Sigmoid colon (tissue), 7 donors: ENCODE measurements at regions of chr5 and their contacts with region 1.

Region 1: GRCh38 chr5:154857530-154858296 is 714 bp upstream of the CNOT8 start:
- DNase-seq: peak; percentile 99
- H3K4me3 ChIP-seq: peak overlapping the region; percentile 78 to 91 (median 86)
- H3K27ac ChIP-seq: peak overlapping the region; percentile 96 to 99 (median 98)
- H3K4me1 ChIP-seq: peaks cover 0 to 49% (median 45%) of the 10 kb centered on the region in 4 donors
- H3K27me3 ChIP-seq: no peaks in the 10 kb centered on the region
- CTCF ChIP-seq: no peak
- EP300 ChIP-seq: peak in 1 of 4 donors; percentile 27
- POLR2A ChIP-seq: peak; percentile 63 to 68

Region 2: DNA sequence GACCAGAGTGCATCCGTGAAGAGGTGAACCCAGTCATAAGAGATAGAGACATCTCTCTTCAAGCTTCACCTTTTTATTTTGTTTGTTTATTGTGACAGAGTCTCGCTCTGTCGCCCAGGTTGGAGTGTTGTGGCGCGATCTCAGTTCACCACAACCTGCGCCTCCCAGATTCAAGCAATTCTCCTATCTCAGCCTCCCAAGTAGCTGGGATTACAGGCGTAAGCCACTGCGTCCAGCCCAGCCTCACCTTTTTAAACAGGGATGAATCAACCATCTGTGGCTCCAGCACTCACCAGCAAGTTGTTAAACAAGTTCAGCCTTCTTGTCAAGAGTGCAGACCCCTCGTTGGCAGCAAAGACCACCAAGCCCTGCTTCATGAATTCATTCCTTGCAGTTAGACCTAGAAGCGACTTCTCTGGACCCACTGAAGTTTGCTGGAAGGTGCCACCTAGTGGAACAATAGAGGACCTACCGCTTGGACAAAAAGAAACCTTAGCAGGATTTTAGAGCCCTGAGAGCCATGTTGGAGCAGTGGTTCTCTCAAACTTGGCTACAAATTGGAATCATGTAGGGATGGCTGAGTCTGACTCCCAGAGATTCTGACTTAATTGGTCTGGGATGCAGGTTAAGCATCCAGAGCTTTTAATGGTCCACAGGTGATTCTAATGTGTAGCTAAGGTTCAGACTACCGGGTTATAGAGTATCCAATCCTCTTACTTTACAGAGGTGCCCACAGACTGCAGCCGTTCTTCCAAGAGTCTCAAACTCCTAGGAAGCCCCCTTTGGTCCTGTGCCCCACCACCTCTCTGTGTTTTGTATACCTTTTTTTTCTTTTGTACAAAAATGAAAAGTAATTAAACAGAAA is 677.6 kb before region 1 on chr5:
- intact Hi-C with region 1: no loop called
- DNase-seq: peak; percentile 71
- H3K4me3 ChIP-seq: no peak overlapping the region
- H3K27ac ChIP-seq: no peak overlapping the region
- H3K4me1 ChIP-seq: peaks cover 0 to 9% (median 4%) of the 10 kb centered on the region in 4 donors
- H3K27me3 ChIP-seq: no peaks in the 10 kb centered on the region
- CTCF ChIP-seq: peak in 3 of 4 experiments; percentile 73 to 83 (median 76)
- EP300 ChIP-seq: no peak
- POLR2A ChIP-seq: no peak

Region 3: GRCh38 chr5:154228696-154229095 is 629.0 kb before region 1 on chr5:
- intact Hi-C with region 1: no loop called
- DNase-seq: no peak
- H3K4me3 ChIP-seq: no peak overlapping the region
- H3K27ac ChIP-seq: no peak overlapping the region
- H3K4me1 ChIP-seq: peaks cover 0 to 8% (median 3%) of the 10 kb centered on the region in 4 donors
- H3K27me3 ChIP-seq: no peaks in the 10 kb centered on the region
- CTCF ChIP-seq: no peak
- EP300 ChIP-seq: no peak
- POLR2A ChIP-seq: no peak

Region 4: GRCh38 chr5:154445422-154446182 is 412.1 kb before region 1 on chr5 and contains the start of gene SAP30L:
- intact Hi-C with region 1: loop called (anchors 10 kb)
- DNase-seq: peak; percentile 97
- H3K4me3 ChIP-seq: peak within 1 kb of the TSS; percentile 77 to 94 (median 84)
- H3K27ac ChIP-seq: peak within 1 kb of the TSS; percentile 90 to 93 (median 92)
- H3K4me1 ChIP-seq: peaks cover 0 to 41% (median 33%) of the 10 kb centered on the region in 4 donors
- H3K27me3 ChIP-seq: no peaks in the 10 kb centered on the region
- CTCF ChIP-seq: no peak
- EP300 ChIP-seq: no peak
- POLR2A ChIP-seq: peak; percentile 81
- total RNA-seq, gene SAP30L: 36.0 to 51.7 (median 42.9) TPM

Region 5: DNA sequence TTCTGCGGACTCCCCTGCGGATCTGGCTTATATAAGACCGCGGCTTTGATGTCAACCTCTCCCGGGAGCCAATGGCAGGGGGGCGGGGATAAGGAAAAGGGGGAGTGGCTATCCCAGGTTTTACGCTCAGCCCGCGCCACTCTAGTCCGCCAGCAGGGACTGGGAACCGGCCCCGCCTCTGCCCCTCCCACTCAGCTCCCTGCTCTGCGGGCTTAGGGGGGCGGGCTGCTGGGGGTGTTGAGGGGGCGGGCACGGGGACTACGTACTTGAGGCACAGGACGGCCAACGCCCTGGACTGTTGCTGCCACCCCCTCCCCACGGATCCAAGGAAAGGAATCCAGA is 379.5 kb before region 1 on chr5 and contains the start of gene HAND1:
- intact Hi-C with region 1: loop called (anchors 5 kb)
- DNase-seq: peak; percentile 98
- H3K4me3 ChIP-seq: peak within 1 kb of the TSS; percentile 70 to 77 (median 72)
- H3K27ac ChIP-seq: peak within 1 kb of the TSS in 3 of 4 donors; percentile 91 to 96 (median 94)
- H3K4me1 ChIP-seq: peaks cover 0 to 73% (median 67%) of the 10 kb centered on the region in 4 donors
- H3K27me3 ChIP-seq: peaks cover 0 to 67% (median 9%) of the 10 kb centered on the region in 3 donors
- CTCF ChIP-seq: peak in 1 of 4 experiments; percentile 10
- EP300 ChIP-seq: peak in 1 of 4 donors; percentile 20
- POLR2A ChIP-seq: no peak
- total RNA-seq, gene HAND1: 45.6 to 69.2 (median 48.9) TPM

Region 6: DNA sequence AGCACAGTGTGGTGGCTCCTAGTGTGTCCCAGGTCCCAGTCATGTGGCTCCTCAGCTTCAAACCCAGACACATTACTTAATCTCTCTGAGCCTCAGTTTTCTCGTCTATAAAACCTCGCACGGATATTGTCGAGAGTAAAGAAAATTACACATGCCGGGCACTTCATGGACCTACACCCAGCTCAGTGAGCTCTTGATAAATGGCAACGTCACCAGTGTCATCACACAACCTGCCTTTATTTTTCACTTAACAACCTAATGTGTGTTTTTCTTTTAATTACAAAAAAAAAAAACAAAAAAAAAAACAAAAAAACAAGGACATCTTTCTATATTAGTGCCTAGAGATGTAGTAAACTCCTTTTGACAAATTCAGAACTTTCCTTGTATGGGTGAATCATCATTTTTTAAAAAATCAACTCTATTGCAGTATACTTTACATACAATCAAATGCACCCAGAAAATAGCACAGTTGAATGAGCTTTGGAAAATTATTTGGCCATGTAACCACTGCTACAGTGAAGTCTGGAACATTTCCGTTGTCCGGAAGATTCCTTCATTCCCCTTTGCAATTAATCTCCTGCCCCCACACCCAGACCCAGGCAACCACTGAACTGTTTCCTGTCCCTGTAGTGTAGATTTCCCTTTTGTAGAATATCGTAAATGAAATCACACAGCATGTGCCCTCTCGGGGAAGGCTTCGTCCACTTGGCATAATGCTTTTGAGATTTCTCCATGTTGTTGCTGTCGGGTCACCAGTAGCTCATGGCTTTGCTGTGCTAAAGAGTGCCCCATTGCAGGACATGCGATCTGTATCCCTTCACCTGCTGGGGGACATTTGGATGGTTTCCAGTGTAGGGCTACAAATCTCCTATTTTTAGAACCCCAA is 203.0 kb before region 1 on chr5:
- intact Hi-C with region 1: loop called (anchors 5 kb)
- DNase-seq: no peak
- H3K4me3 ChIP-seq: peak overlapping the region in 3 of 4 donors; percentile 22 to 34 (median 29)
- H3K27ac ChIP-seq: peak overlapping the region in 3 of 4 donors; percentile 29 to 64 (median 48)
- H3K4me1 ChIP-seq: peaks cover 0 to 17% (median 11%) of the 10 kb centered on the region in 4 donors
- H3K27me3 ChIP-seq: no peaks in the 10 kb centered on the region
- CTCF ChIP-seq: no peak
- EP300 ChIP-seq: no peak
- POLR2A ChIP-seq: no peak

Region 7: GRCh38 chr5:154754460-154755360 is 103.0 kb before region 1 on chr5:
- intact Hi-C with region 1: loop called (anchors 2 kb)
- DNase-seq: peak; percentile 100
- H3K4me3 ChIP-seq: peak overlapping the region; percentile 88 to 99 (median 96)
- H3K27ac ChIP-seq: peak overlapping the region; percentile 99 to 100 (median 100)
- H3K4me1 ChIP-seq: peaks cover 0 to 45% (median 42%) of the 10 kb centered on the region in 4 donors
- H3K27me3 ChIP-seq: no peaks in the 10 kb centered on the region
- CTCF ChIP-seq: peak in 2 of 4 experiments; percentile 2 to 17
- EP300 ChIP-seq: peak in 2 of 4 donors; percentile 35 to 92
- POLR2A ChIP-seq: peak; percentile 40 to 43

Region 8: GRCh38 chr5:154940772-154941620 is 83.3 kb after region 1 on chr5 and contains the start of gene MRPL22:
- intact Hi-C with region 1: loop called (anchors 2 kb)
- DNase-seq: peak; percentile 95
- H3K4me3 ChIP-seq: peak within 1 kb of the TSS; percentile 47 to 75 (median 68)
- H3K27ac ChIP-seq: peak within 1 kb of the TSS; percentile 70 to 81 (median 80)
- H3K4me1 ChIP-seq: peaks cover 0 to 56% (median 43%) of the 10 kb centered on the region in 4 donors
- H3K27me3 ChIP-seq: no peaks in the 10 kb centered on the region
- CTCF ChIP-seq: peak in 2 of 4 experiments; percentile 5 to 42
- EP300 ChIP-seq: no peak
- POLR2A ChIP-seq: peak; percentile 43 to 72
- total RNA-seq, gene MRPL22: 13.8 to 40.0 (median 26.5) TPM

Region 9: DNA sequence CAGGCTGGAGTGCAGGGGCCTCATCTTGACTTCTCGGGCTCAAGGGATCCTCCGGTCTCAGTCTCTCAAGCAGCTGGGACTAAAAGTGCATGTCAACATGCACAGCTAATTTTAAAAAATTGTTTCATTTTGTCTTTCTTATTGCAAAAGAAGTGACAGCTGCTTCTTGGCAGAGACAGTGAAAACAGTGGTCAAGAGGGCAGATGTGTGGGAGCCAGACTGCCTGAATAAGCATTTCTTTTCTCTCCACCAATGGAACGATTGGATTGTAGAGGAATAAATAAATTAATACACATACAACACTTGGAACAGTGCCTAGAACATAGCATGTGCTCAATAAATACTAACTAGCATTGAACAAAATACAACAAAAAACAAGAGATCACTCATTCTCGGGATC is 128.4 kb after region 1 on chr5:
- intact Hi-C with region 1: no loop called
- DNase-seq: no peak
- H3K4me3 ChIP-seq: no peak overlapping the region
- H3K27ac ChIP-seq: no peak overlapping the region
- H3K4me1 ChIP-seq: no peaks in the 10 kb centered on the region
- H3K27me3 ChIP-seq: no peaks in the 10 kb centered on the region
- CTCF ChIP-seq: no peak
- EP300 ChIP-seq: no peak
- POLR2A ChIP-seq: no peak

Region 10: GRCh38 chr5:155027993-155028629 is 170.4 kb after region 1 on chr5:
- intact Hi-C with region 1: no loop called
- DNase-seq: no peak
- H3K4me3 ChIP-seq: no peak overlapping the region
- H3K27ac ChIP-seq: no peak overlapping the region
- H3K4me1 ChIP-seq: no peaks in the 10 kb centered on the region
- H3K27me3 ChIP-seq: no peaks in the 10 kb centered on the region
- CTCF ChIP-seq: no peak
- EP300 ChIP-seq: no peak
- POLR2A ChIP-seq: no peak